PC-3 (cell line): ENCODE measurements at regions of chr5 and their contacts with region 1.

Region 1: DNA sequence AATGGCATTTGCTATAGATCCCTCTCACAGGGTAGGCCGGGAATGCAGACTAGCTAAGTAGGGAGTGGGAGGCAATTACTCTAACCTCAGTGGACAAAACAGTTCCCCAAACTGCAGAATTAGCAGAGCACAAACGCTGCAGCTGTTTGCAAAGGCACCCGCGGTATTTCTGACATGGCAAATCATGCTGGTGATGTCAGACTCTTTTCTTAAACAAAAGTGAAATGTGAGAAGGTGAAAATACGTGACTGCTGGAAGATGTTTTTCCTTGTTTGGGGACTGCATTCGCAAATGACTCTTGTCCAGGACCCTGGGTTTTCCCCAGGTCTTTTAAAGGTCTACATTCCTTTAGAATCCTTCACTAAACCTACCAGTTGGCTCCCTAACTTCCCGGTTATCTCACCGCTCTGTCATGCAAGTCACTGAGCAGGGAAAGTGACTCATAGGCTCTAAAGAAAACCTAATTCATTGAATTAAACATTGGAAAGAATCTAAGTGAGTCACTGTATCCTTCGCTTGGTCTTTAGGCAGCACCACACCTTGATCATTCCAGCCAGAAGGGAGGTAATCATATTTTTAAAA is 91.5 kb upstream of the DNAH5 start:
- DNase-seq: peak; percentile 100
- ATAC-seq: peak; percentile 68
- H3K4me3 ChIP-seq: peak overlapping the region; percentile 53
- H3K27ac ChIP-seq: peak overlapping the region; percentile 97
- H3K4me1 ChIP-seq: peaks cover 80% of the 10 kb centered on the region
- H3K27me3 ChIP-seq: no peaks in the 10 kb centered on the region
- CTCF ChIP-seq: no peak

Region 2: GRCh38 chr5:14011089-14012004 is 24.6 kb before region 1 on chr5:
- CTCF ChIA-PET with region 1: no interaction called
- POLR2A ChIA-PET with region 1: interaction called, 16 read pairs
- intact Hi-C with region 1: loop called (anchors 1 kb)
- DNase-seq: peak; percentile 95
- ATAC-seq: peak; percentile 72
- H3K4me3 ChIP-seq: peak overlapping the region; percentile 75
- H3K27ac ChIP-seq: peak overlapping the region; percentile 96
- H3K4me1 ChIP-seq: peaks cover 39% of the 10 kb centered on the region
- H3K27me3 ChIP-seq: no peaks in the 10 kb centered on the region
- CTCF ChIP-seq: no peak

Region 3: GRCh38 chr5:14142827-14143548 is 107.0 kb after region 1 on chr5 and contains the start of gene TRIO:
- CTCF ChIA-PET with region 1: no interaction called
- POLR2A ChIA-PET with region 1: interaction called, 4 read pairs
- intact Hi-C with region 1: loop called (anchors 2 kb)
- DNase-seq: peak; percentile 97
- ATAC-seq: peak; percentile 61
- H3K4me3 ChIP-seq: peak within 1 kb of the TSS; percentile 98
- H3K27ac ChIP-seq: peak within 1 kb of the TSS; percentile 89
- H3K4me1 ChIP-seq: peaks cover 28% of the 10 kb centered on the region
- H3K27me3 ChIP-seq: no peaks in the 10 kb centered on the region
- CTCF ChIP-seq: peak; percentile 61
- total RNA-seq, gene TRIO: 211 and 271 TPM in 2 replicates

Region 4: GRCh38 chr5:14270209-14270702 is 234.3 kb after region 1 on chr5:
- CTCF ChIA-PET with region 1: no interaction called
- POLR2A ChIA-PET with region 1: interaction called, 3 read pairs
- intact Hi-C with region 1: loop called (anchors 1 kb)
- DNase-seq: peak; percentile 83
- ATAC-seq: peak; percentile 5
- H3K4me3 ChIP-seq: no peak overlapping the region
- H3K27ac ChIP-seq: peak overlapping the region; percentile 96
- H3K4me1 ChIP-seq: peaks cover 55% of the 10 kb centered on the region
- H3K27me3 ChIP-seq: no peaks in the 10 kb centered on the region
- CTCF ChIP-seq: peak; percentile 95

Region 5: GRCh38 chr5:14298126-14298847 is 262.3 kb after region 1 on chr5:
- CTCF ChIA-PET with region 1: no interaction called
- POLR2A ChIA-PET with region 1: no interaction called
- intact Hi-C with region 1: no loop called
- DNase-seq: peak; percentile 51
- ATAC-seq: peak; percentile 71
- H3K4me3 ChIP-seq: no peak overlapping the region
- H3K27ac ChIP-seq: peak overlapping the region; percentile 2; the same call in 1 of the 2 replicates
- H3K4me1 ChIP-seq: peaks cover 11% of the 10 kb centered on the region; the same call in 1 of the 2 replicates
- H3K27me3 ChIP-seq: no peaks in the 10 kb centered on the region
- CTCF ChIP-seq: no peak

Region 6: GRCh38 chr5:14569948-14570711 is 534.2 kb after region 1 on chr5:
- CTCF ChIA-PET with region 1: no interaction called
- POLR2A ChIA-PET with region 1: no interaction called
- intact Hi-C with region 1: loop called (anchors 1 kb)
- DNase-seq: peak; percentile 99
- ATAC-seq: peak; percentile 90
- H3K4me3 ChIP-seq: peak overlapping the region; percentile 16; the same call in 1 of the 2 replicates
- H3K27ac ChIP-seq: peak overlapping the region; percentile 98
- H3K4me1 ChIP-seq: peaks cover 38% of the 10 kb centered on the region
- H3K27me3 ChIP-seq: no peaks in the 10 kb centered on the region
- CTCF ChIP-seq: no peak